T-cell (primary cell): ENCODE measurements at regions of chr11 and their contacts with region 1.

Region 1: DNA sequence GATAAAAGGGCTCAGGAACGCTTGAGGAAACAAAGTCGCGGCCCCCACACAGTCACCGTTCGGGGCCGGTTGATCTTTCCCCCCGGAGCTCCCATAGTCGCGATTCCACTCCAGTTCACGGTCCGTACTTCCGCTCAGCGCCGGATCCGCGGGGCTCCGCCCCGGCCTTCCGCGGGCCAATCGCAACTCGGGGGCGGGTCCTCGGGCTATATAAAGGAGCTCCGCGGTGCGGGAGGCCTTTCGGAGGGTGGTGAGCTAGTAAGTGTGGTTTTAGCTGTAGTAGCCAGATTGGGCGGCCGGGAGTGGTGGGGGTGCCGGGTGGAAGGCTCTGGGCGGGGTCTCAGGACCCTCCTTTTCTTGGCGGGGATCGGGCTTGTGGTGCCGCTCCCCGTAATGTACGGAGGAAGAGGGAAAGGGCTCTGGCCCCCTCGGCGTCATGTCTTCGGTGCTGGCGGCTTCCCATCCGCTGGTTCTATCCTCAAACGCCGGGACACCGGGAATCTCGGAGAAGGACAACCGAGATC is at the starts of genes C11orf98 and CSKMT:
- DNase-seq: peak; percentile 86 to 97 (median 93)
- ATAC-seq: peak; percentile 90 to 94 (median 92)
- H3K4me3 ChIP-seq: peak within 1 kb of the TSS; percentile 97 to 99
- H3K4me3 Mint-ChIP-seq: peak within 1 kb of the TSS; percentile 93 to 95 (median 95)
- H3K27ac ChIP-seq: peak within 1 kb of the TSS; percentile 73
- H3K27ac Mint-ChIP-seq: peak within 1 kb of the TSS; percentile 93 to 94
- H3K4me1 ChIP-seq: peaks cover 18 to 43% of the 10 kb centered on the region in 2 experiments
- H3K4me1 Mint-ChIP-seq: peaks cover 33 to 44% (median 40%) of the 10 kb centered on the region in 3 donors
- H3K27me3 ChIP-seq: peaks cover 0 to 3% of the 10 kb centered on the region in 2 experiments
- H3K27me3 Mint-ChIP-seq: no peaks in the 10 kb centered on the region
- total RNA-seq, gene C11orf98: 28.3 to 62.6 (median 54.8) TPM
- total RNA-seq, gene CSKMT: 14.8 to 35.6 (median 27.4) TPM

Region 2: DNA sequence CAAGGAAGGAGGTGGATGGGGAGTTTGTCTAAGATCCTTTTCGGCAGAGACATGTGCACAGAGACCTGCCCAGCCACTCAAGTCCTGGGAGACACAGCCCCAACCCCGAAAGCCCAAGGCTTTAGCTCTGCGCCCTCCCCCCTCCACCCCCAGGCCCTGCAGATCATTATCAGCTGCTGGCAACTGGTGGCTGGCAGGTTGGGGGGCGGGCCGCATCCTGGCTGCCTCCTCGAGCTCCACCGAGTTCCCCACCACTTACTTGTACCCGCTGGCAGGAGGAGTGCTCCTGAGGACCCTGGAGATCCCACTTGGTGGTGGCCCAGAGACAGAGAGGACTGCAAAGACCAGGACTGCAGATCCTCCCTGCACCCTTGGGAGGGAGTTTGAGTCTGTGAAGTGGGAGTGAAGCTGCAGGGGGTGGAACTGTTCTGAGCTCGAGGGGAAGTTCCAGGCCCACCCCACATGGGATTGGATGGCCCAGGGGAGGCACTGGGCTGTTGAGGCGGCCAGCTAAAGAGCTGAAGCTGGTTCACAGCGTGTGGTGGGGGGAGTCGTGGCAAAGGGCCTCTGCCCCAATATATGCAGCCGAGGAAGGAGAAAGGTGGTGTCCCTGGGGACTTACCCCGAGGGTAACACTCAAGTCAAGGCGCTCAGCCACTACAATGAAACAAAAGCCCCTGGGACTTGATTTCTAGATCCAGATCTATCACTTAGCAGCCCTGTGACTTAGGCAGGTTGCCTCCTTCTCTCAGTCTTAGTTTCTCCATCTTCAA is 1843.1 kb before region 1 on chr11:
- CTCF ChIA-PET with region 1: no interaction called
- POLR2A ChIA-PET with region 1: no interaction called
- DNase-seq: no peak
- ATAC-seq: no peak
- H3K4me3 ChIP-seq: no peak overlapping the region
- H3K4me3 Mint-ChIP-seq: no peak overlapping the region
- H3K27ac ChIP-seq: no peak overlapping the region
- H3K27ac Mint-ChIP-seq: no peak overlapping the region
- H3K4me1 ChIP-seq: peaks cover 0 to 2% of the 10 kb centered on the region in 2 experiments
- H3K4me1 Mint-ChIP-seq: no peaks in the 10 kb centered on the region
- H3K27me3 ChIP-seq: peaks cover 0 to 21% of the 10 kb centered on the region in 2 experiments
- H3K27me3 Mint-ChIP-seq: no peaks in the 10 kb centered on the region

Region 3: DNA sequence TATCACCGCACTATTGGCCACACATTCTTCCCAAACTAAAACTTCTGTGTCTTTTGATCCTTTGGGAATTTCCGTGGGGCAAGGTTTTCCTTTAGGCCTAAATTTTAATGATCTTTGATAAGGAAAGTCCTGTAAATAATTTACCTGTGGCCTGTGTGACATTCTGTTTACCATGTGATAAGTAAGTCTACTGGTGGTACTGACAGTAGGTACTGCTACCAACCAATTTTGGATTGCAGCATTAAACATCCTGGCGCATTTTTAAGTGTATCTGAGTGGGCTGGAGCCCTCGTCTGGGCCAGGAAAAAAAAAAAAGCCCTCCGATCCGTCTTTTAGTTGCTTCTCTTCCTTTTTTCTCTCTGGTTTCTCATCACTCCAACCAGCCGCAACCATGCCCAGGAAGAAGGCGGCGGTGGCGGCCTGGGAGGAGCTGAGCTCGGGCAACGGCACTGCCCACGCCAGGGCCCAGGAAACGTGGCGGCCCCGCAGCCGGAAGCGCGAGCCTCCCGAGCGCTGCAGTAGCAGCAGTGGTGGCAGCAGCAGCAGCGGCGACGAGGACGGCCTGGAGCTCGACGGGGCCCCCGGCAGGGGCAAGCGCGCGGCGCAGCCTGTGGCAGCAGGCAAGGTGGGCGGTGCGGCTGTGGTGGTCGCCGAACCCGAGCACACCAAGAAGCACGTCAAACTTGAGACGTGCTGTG is 294.2 kb before region 1 on chr11:
- CTCF ChIA-PET with region 1: no interaction called
- POLR2A ChIA-PET with region 1: no interaction called
- DNase-seq: peak in 31 of 35 experiments; percentile 8 to 66 (median 34)
- ATAC-seq: peak; percentile 92 to 97 (median 96)
- H3K4me3 ChIP-seq: no peak overlapping the region
- H3K4me3 Mint-ChIP-seq: peak overlapping the region; percentile 52 to 65 (median 61)
- H3K27ac ChIP-seq: peak overlapping the region; percentile 52
- H3K27ac Mint-ChIP-seq: peak overlapping the region; percentile 84 to 87
- H3K4me1 ChIP-seq: peaks cover 0 to 12% of the 10 kb centered on the region in 2 experiments
- H3K4me1 Mint-ChIP-seq: peaks cover 0 to 10% (median 4%) of the 10 kb centered on the region in 3 donors
- H3K27me3 ChIP-seq: no peaks in the 10 kb centered on the region
- H3K27me3 Mint-ChIP-seq: no peaks in the 10 kb centered on the region

Region 4: DNA sequence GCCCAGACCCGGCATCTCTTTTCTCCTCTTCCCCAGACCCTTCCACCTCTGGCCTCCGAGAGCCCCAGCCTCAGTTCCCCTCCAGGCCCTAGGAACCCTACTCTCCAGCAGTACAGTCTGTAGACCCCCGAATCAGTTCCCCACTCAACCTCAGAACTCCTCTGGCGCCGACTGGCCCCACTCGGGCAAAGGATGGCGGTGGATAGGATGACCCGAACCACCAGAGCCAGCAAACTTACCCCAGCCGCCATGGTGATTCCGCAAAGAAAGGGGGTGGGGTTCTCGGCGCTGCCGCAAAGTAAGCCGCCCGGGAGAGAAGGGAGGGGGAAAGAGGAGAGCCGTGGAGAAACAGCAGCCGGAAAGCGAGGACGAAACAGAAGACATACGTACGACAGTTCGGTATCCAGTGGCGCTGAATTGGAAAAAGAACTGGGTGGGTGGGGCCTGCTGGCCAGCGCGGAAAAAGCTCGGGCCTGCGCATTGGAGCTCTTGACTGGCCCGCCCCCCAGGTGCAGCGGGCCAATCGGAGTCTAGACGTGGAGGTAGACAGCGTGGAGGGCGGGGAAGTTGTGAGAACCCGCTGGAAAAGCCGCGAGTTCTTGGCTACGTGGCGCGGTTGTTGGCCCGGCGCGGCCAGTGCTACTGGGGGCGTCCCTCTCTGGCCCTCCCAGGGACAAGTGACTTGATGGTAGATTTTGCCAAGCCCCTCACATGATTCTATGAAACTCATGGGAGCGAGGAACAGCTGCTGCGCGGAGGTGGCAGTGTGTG is 91.4 kb before region 1 on chr11 and contains the start of gene EEF1G:
- CTCF ChIA-PET with region 1: interaction called in 1 of 2 experiments, 11 read pairs
- POLR2A ChIA-PET with region 1: interaction called, 6 read pairs
- DNase-seq: peak; percentile 91 to 100 (median 98)
- ATAC-seq: peak; percentile 93 to 96 (median 94)
- H3K4me3 ChIP-seq: peak within 1 kb of the TSS; percentile 88 to 92
- H3K4me3 Mint-ChIP-seq: peak within 1 kb of the TSS; percentile 95 to 97 (median 97)
- H3K27ac ChIP-seq: peak within 1 kb of the TSS; percentile 76
- H3K27ac Mint-ChIP-seq: peak within 1 kb of the TSS; percentile 91 to 97
- H3K4me1 ChIP-seq: peaks cover 11 to 43% of the 10 kb centered on the region in 2 experiments
- H3K4me1 Mint-ChIP-seq: peaks cover 55 to 56% (median 56%) of the 10 kb centered on the region in 3 donors
- H3K27me3 ChIP-seq: no peaks in the 10 kb centered on the region
- H3K27me3 Mint-ChIP-seq: no peaks in the 10 kb centered on the region
- total RNA-seq, gene EEF1G: 1,908 to 2,187 (median 2,119) TPM

Region 5: GRCh38 chr11:62601394-62602140 is 63.6 kb before region 1 on chr11 and contains the start of gene MTA2:
- CTCF ChIA-PET with region 1: interaction called in 1 of 2 experiments, 8 read pairs
- POLR2A ChIA-PET with region 1: interaction called, 4 to 15 read pairs
- DNase-seq: peak; percentile 91 to 100 (median 97)
- ATAC-seq: peak; percentile 80 to 83 (median 82)
- H3K4me3 ChIP-seq: peak within 1 kb of the TSS; percentile 95 to 98
- H3K4me3 Mint-ChIP-seq: peak within 1 kb of the TSS; percentile 86 to 97 (median 92)
- H3K27ac ChIP-seq: peak within 1 kb of the TSS; percentile 85
- H3K27ac Mint-ChIP-seq: peak within 1 kb of the TSS; percentile 95 to 100
- H3K4me1 ChIP-seq: peaks cover 14 to 52% of the 10 kb centered on the region in 2 experiments
- H3K4me1 Mint-ChIP-seq: peaks cover 55 to 59% (median 55%) of the 10 kb centered on the region in 3 donors
- H3K27me3 ChIP-seq: no peaks in the 10 kb centered on the region
- H3K27me3 Mint-ChIP-seq: no peaks in the 10 kb centered on the region
- total RNA-seq, gene MTA2: 151 to 185 (median 184) TPM

Region 6: DNA sequence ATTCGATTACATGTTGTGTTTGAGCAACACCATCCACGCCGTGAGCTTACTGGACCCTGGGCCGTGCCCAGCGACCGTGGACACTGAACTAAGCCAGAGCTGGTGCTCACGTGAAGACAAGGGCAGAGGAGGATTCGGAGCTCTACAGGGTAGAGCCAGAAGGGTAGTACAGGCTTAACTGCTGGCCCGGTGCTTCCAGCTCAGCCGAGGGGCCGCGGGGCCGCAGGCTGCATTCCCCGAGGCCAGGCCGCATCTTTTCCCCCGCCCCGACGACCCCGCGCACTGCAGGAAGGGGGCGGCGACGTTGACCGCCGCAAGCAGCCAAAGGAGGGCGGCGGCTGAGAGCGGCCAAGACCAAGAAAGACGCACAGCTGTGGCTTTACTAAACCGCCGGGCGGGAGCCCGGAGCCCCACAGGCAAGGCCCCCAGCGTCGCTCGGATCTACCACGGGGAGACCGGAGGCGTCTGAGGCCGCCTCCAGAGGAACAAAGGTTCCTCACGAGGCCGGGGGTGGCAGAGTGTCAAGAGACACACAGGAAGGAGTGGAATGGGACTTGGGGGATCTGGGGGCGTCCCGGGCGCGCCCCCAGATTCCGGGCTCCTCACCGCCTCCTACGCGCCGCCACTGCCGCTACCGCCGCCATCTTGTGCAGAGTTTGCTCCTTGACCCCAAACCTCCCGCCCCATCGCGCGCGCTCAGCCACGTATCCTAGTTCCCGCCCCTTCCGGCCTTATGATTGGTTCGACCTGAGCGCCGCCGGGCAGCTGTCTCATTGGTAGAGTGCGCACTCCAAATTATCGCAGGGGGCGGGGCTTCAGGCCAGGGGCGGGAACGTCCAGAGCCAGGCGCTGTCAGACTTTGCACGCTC is 18.9 kb before region 1 on chr11 and contains the start of gene GANAB:
- CTCF ChIA-PET with region 1: interaction called in 1 of 2 experiments, 18 read pairs
- POLR2A ChIA-PET with region 1: interaction called, 8 to 34 read pairs
- DNase-seq: peak; percentile 96 to 100 (median 99)
- ATAC-seq: peak; percentile 98 to 99 (median 98)
- H3K4me3 ChIP-seq: peak within 1 kb of the TSS; percentile 95 to 100
- H3K4me3 Mint-ChIP-seq: peak within 1 kb of the TSS; percentile 95 to 98 (median 97)
- H3K27ac ChIP-seq: peak within 1 kb of the TSS; percentile 94
- H3K27ac Mint-ChIP-seq: peak within 1 kb of the TSS; percentile 93 to 96
- H3K4me1 ChIP-seq: peaks cover 11 to 47% of the 10 kb centered on the region in 2 experiments
- H3K4me1 Mint-ChIP-seq: peaks cover 27 to 39% (median 36%) of the 10 kb centered on the region in 3 donors
- H3K27me3 ChIP-seq: no peaks in the 10 kb centered on the region
- H3K27me3 Mint-ChIP-seq: no peaks in the 10 kb centered on the region
- total RNA-seq, gene GANAB: 216 to 278 (median 257) TPM

Region 7: GRCh38 chr11:62680825-62681240 is 15.7 kb after region 1 on chr11:
- CTCF ChIA-PET with region 1: interaction called in 1 of 2 experiments, 7 read pairs
- POLR2A ChIA-PET with region 1: interaction called, 3 to 21 read pairs
- DNase-seq: peak in 23 of 35 experiments; percentile 11 to 70 (median 29)
- ATAC-seq: peak; percentile 74 to 81 (median 77)
- H3K4me3 ChIP-seq: no peak overlapping the region
- H3K4me3 Mint-ChIP-seq: peak overlapping the region; percentile 49 to 53 (median 49)
- H3K27ac ChIP-seq: no peak overlapping the region
- H3K27ac Mint-ChIP-seq: peak overlapping the region; percentile 75 to 77
- H3K4me1 ChIP-seq: peaks cover 12 to 25% of the 10 kb centered on the region in 2 experiments
- H3K4me1 Mint-ChIP-seq: peaks cover 34 to 36% (median 36%) of the 10 kb centered on the region in 3 donors
- H3K27me3 ChIP-seq: no peaks in the 10 kb centered on the region
- H3K27me3 Mint-ChIP-seq: no peaks in the 10 kb centered on the region

Region 8: GRCh38 chr11:62726915-62727763 is 62.0 kb after region 1 on chr11 and contains the start of gene HNRNPUL2:
- CTCF ChIA-PET with region 1: interaction called in 1 of 2 experiments, 5 read pairs
- POLR2A ChIA-PET with region 1: interaction called, 4 to 19 read pairs
- DNase-seq: peak; percentile 96 to 100 (median 98)
- ATAC-seq: peak; percentile 77 to 84 (median 82)
- H3K4me3 ChIP-seq: peak within 1 kb of the TSS; percentile 86 to 95
- H3K4me3 Mint-ChIP-seq: peak within 1 kb of the TSS; percentile 95 to 98 (median 98)
- H3K27ac ChIP-seq: peak within 1 kb of the TSS; percentile 94
- H3K27ac Mint-ChIP-seq: peak within 1 kb of the TSS; percentile 98 to 99
- H3K4me1 ChIP-seq: peaks cover 20 to 43% of the 10 kb centered on the region in 2 experiments
- H3K4me1 Mint-ChIP-seq: peaks cover 47 to 62% (median 58%) of the 10 kb centered on the region in 3 donors
- H3K27me3 ChIP-seq: no peaks in the 10 kb centered on the region
- H3K27me3 Mint-ChIP-seq: no peaks in the 10 kb centered on the region
- total RNA-seq, gene HNRNPUL2: 45.8 to 67.8 (median 62.7) TPM

Region 9: DNA sequence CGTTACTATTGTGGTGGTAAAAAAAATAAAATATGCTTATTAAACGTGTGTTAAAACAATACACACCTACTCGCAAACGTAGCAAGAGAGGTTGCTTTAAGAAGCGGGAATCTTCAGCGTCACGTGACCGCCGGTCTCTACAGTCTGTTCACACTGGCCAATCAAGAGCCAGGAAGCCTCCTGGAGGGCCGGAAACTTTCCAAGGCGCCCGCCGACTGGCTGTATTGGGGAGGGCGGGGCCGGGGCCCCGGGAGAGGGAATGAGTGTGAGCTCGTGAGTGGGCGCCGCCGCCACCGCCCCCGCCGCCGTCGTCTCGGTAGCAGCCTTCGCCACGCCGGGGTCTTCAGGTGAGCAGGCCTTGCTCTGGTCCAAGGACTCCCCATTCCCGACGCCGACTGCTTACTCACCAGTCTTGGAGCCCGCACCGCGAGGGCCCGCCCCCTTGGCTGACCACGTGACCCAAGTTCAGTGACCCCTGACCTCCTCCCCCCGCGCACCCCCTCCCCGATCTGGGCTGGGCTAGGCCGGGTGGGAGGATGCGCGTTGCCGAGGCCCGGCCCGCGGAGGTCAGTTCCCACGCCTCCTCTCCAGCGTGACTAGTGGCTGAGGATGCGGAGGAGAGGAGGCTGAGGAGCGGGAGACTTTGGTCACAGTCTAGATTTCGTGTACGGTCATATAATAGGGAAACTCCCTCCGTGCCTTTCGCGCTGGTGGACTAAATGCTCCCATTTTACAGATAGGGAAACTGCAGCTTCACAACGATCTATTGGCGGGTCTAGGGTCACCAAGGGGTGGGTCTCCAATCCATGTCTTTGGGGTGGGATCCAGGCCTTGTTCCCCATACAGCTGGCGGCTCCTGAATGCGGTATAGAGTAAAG is 106.2 kb after region 1 on chr11 and contains the start of gene TAF6L:
- CTCF ChIA-PET with region 1: no interaction called
- POLR2A ChIA-PET with region 1: no interaction called
- DNase-seq: peak; percentile 71 to 91 (median 82)
- ATAC-seq: peak; percentile 85 to 89 (median 89)
- H3K4me3 ChIP-seq: peak within 1 kb of the TSS; percentile 67 to 82
- H3K4me3 Mint-ChIP-seq: peak within 1 kb of the TSS; percentile 88 to 94 (median 92)
- H3K27ac ChIP-seq: peak within 1 kb of the TSS; percentile 77
- H3K27ac Mint-ChIP-seq: peak within 1 kb of the TSS; percentile 94 to 95
- H3K4me1 ChIP-seq: peaks cover 8 to 26% of the 10 kb centered on the region in 2 experiments
- H3K4me1 Mint-ChIP-seq: peaks cover 21 to 28% (median 27%) of the 10 kb centered on the region in 3 donors
- H3K27me3 ChIP-seq: no peaks in the 10 kb centered on the region
- H3K27me3 Mint-ChIP-seq: no peaks in the 10 kb centered on the region
- total RNA-seq, gene TAF6L: 15.1 to 29.5 (median 29.0) TPM

Region 10: GRCh38 chr11:64317957-64318693 is 1653.0 kb after region 1 on chr11 and contains the start of gene PRDX5:
- CTCF ChIA-PET with region 1: interaction called in 1 of 2 experiments, 12 read pairs
- POLR2A ChIA-PET with region 1: interaction called in 1 of 2 experiments, 3 read pairs
- DNase-seq: peak; percentile 84 to 98 (median 94)
- ATAC-seq: peak; percentile 77 to 85 (median 82)
- H3K4me3 ChIP-seq: peak within 1 kb of the TSS; percentile 76 to 79
- H3K4me3 Mint-ChIP-seq: peak within 1 kb of the TSS; percentile 91 to 96 (median 93)
- H3K27ac ChIP-seq: peak within 1 kb of the TSS; percentile 98
- H3K27ac Mint-ChIP-seq: peak within 1 kb of the TSS; percentile 99 to 100
- H3K4me1 ChIP-seq: peaks cover 2 to 36% of the 10 kb centered on the region in 2 experiments
- H3K4me1 Mint-ChIP-seq: peaks cover 22 to 50% (median 36%) of the 10 kb centered on the region in 3 donors
- H3K27me3 ChIP-seq: no peaks in the 10 kb centered on the region
- H3K27me3 Mint-ChIP-seq: no peaks in the 10 kb centered on the region
- total RNA-seq, gene PRDX5: 35.8 to 86.7 (median 71.7) TPM